Right ventricle myocardium inferior (tissue), 1 donor: ENCODE measurements at regions of chr2 and their contacts with region 1.

Region 1: GRCh38 chr2:168961450-168962229 is 60.5 kb downstream of the G6PC2 start:
- DNase-seq: no peak
- ATAC-seq: peak; percentile 85

Region 2: DNA sequence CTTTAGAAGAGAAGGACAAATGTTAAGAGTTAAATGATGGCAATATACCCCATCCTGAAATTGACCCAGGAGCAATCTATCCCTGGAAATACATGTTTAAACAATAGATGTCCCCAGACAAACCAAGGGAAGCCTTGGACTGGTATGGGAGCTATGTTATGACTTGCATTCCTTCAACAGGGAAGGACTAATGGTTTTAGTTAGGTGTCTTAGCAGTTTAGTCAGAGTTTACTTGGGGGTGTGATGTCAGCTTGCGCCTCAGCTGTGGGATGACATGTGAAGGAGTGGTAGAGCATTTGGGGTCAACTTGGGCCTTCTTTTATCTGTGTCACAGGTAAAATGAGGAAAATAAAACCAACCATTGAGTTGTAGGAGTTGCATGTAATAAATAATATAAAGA is 108.2 kb before region 1 on chr2:
- intact Hi-C with region 1: no loop called
- DNase-seq: no peak
- ATAC-seq: no peak

Region 3: GRCh38 chr2:169141713-169142352 is 180.2 kb after region 1 on chr2:
- intact Hi-C with region 1: loop called (anchors 5 kb)
- DNase-seq: no peak
- ATAC-seq: peak; percentile 54

Region 4: GRCh38 chr2:169275696-169276444 is 314.2 kb after region 1 on chr2:
- intact Hi-C with region 1: no loop called
- DNase-seq: no peak
- ATAC-seq: no peak

Region 5: DNA sequence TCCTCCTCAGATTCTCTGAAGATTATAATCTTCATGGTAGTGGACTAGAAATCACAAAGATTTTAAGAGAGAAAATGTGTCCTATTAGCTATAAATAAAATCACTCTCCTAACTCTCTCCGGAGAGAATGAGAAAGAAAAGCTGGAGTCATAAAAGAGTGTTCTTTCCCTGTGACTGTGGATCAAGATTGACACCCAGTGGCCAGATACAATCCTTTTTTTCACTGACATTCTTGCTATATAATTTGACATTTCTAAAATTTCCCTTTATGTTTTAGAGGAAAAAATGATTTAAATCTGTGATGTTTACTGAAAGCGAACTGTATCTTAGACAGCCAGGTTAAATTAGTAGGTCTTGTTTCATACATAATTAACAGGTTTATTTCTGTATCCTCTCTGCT is 436.1 kb after region 1 on chr2:
- intact Hi-C with region 1: loop called (anchors 5 kb)
- DNase-seq: no peak
- ATAC-seq: no peak

Region 6: DNA sequence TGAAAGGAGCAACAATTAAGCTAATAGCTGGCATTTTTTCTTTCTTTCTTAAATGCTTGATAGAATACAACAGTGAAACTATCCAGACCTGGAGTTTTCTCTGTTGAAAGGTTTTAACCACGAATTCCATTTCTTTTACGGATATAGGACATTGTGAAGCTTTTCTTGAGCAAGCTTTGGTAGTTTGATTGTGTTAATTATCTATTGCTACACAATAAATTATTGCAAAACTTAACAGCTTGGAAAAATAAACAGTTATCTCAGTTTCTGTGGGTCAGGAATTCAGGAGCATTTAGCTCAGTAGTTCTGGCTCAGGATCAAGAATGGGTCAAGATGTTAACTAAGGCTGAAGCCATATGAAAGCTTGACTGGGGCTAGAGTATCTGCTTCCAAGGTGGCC is 744.3 kb after region 1 on chr2:
- intact Hi-C with region 1: no loop called
- DNase-seq: no peak
- ATAC-seq: no peak